Activated CD4-positive, alpha-beta memory T cell treated with anti-CD3 and anti-CD28 coated beads, Interleukin-2, amount 10 ng/mL, durations not matched to agents 7 days and 5 days (primary cell): ENCODE measurements at regions of chr7 and their contacts with region 1.

Region 1: GRCh38 chr7:78039790-78040776 is 241.5 kb downstream of the PHTF2 start:
- DNase-seq: peak; percentile 59
- H3K4me3 Mint-ChIP-seq: no peak overlapping the region
- H3K27ac Mint-ChIP-seq: no peak overlapping the region
- H3K4me1 Mint-ChIP-seq: peaks cover 2% of the 10 kb centered on the region
- H3K27me3 Mint-ChIP-seq: peaks cover 14% of the 10 kb centered on the region

Region 2: GRCh38 chr7:77657427-77658224 is 382.5 kb before region 1 on chr7:
- CTCF ChIA-PET with region 1: interaction called, 21 read pairs
- POLR2A ChIA-PET with region 1: no interaction called
- DNase-seq: no peak
- H3K4me3 Mint-ChIP-seq: no peak overlapping the region
- H3K27ac Mint-ChIP-seq: no peak overlapping the region
- H3K4me1 Mint-ChIP-seq: no peaks in the 10 kb centered on the region
- H3K27me3 Mint-ChIP-seq: no peaks in the 10 kb centered on the region

Region 3: DNA sequence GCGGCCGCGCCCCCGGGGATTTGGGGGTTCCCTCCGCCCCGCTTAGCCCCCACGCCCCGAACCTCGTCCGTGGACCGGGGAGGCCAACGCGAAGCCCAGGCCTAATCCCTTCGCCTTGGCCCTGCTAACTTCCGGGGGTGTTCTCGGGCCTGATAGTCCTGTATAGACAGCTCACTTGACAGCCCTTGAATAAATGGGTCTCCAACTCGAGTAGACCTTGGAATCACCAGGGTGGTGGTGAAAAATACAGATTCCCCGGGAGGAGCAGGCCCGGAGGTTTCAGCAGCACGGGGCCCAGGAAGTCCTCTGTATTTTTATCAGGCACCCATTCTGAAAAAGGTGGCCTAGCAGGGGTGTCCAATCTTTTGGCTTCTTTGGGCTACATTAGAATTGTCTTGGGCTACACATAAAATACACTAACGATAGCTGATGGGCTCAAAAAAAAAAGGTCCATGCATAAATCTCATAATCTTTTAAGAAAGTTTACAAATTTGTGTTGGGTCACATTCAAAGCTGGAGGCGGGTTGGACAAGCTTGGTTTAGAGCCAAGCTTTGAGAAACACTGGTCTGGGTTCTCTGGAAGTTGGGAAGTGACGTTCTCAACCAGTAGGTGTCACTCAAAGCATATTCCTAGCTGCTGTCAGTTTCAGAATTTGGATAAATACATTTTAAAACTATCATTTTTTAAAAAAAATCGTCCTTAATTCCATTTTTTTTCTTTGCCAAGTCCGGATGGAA is 19.8 kb before region 1 on chr7:
- CTCF ChIA-PET with region 1: interaction called, 36 read pairs
- POLR2A ChIA-PET with region 1: interaction called, 5 read pairs
- DNase-seq: peak; percentile 29
- H3K4me3 Mint-ChIP-seq: peak overlapping the region; percentile 61
- H3K27ac Mint-ChIP-seq: peak overlapping the region; percentile 41
- H3K4me1 Mint-ChIP-seq: peaks cover 14% of the 10 kb centered on the region
- H3K27me3 Mint-ChIP-seq: peaks cover 26% of the 10 kb centered on the region